Activated CD8-positive, alpha-beta T cell treated with anti-CD3 and anti-CD28 coated beads for 36 hours (primary cell): ENCODE measurements at regions of chr16 and their contacts with region 1.

Region 1: GRCh38 chr16:84511180-84511824 is 6.8 kb upstream of the MEAK7 start:
- DNase-seq: peak; percentile 92
- ATAC-seq: peak; percentile 9
- H3K4me3 Mint-ChIP-seq: peak overlapping the region; percentile 39
- H3K27ac Mint-ChIP-seq: peak overlapping the region; percentile 80
- H3K4me1 Mint-ChIP-seq: peaks cover 74% of the 10 kb centered on the region
- H3K27me3 Mint-ChIP-seq: no peaks in the 10 kb centered on the region
- CTCF ChIP-seq: peak; percentile 94

Region 2: GRCh38 chr16:84266451-84266850 is 244.9 kb before region 1 on chr16:
- CTCF ChIA-PET with region 1: no interaction called
- POLR2A ChIA-PET with region 1: no interaction called
- intact Hi-C with region 1: no loop called
- DNase-seq: peak; percentile 55
- ATAC-seq: peak; percentile 93
- H3K4me3 Mint-ChIP-seq: no peak overlapping the region
- H3K27ac Mint-ChIP-seq: no peak overlapping the region
- H3K4me1 Mint-ChIP-seq: no peaks in the 10 kb centered on the region
- H3K27me3 Mint-ChIP-seq: peaks cover 2% of the 10 kb centered on the region
- CTCF ChIP-seq: no peak

Region 3: DNA sequence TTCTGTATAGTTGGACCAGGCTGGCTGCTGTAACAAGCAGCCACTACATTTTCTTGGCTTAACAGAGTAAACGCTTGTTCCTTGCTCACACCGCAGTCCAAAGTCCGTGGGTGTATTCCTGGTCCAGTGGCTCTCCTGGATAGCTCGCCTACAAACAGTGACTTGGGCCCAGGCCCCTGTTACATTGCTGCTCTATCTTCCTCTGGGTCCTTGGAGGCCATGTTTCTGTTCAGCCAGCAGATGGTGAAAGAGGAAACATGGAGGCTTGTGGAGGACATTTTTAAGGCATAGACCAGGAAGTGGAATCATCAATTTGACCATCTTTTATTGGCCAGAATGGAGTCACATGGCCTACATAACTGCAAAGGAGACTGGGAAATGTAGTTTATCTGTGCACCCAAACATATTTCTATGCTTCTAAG is 87.9 kb before region 1 on chr16:
- CTCF ChIA-PET with region 1: no interaction called
- POLR2A ChIA-PET with region 1: no interaction called
- intact Hi-C with region 1: no loop called
- DNase-seq: no peak
- ATAC-seq: peak; percentile 79
- H3K4me3 Mint-ChIP-seq: no peak overlapping the region
- H3K27ac Mint-ChIP-seq: no peak overlapping the region
- H3K4me1 Mint-ChIP-seq: peaks cover 2% of the 10 kb centered on the region
- H3K27me3 Mint-ChIP-seq: peaks cover 3% of the 10 kb centered on the region
- CTCF ChIP-seq: no peak

Region 4: DNA sequence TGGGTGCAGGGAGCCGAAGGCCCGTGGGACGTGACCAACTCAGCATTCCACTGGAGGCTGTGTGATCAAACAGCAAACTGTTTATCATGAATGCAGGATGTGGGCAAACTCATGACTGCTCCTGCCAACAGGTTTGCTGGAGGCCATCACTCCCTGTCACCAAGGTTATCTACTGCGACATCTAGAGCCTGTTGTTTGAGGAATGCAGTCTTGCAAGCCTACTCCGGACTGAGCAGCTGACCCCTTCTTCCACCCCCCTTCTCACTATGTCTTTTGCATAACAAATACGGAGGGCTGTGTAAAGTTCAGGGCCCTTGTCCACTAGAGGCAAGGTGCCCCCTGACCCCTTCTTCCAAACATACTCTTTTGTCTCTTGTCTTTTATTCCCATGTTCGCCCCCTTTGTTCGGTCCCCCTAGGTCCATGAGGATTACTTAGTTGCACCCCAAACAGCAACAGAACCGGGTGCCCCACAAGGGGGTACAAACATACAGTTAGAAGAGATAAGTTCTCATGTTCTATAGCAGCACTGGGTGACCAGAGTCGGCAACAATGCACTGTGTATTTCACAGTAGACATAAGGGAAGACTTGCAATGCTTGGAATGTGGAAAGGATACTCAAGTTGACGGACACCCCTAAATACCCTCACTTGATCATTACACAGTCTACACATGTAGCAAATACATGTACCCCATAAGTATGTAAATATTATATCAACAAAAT is 35.5 kb before region 1 on chr16:
- CTCF ChIA-PET with region 1: no interaction called
- POLR2A ChIA-PET with region 1: no interaction called
- intact Hi-C with region 1: no loop called
- DNase-seq: no peak
- ATAC-seq: no peak
- H3K4me3 Mint-ChIP-seq: no peak overlapping the region
- H3K27ac Mint-ChIP-seq: no peak overlapping the region
- H3K4me1 Mint-ChIP-seq: peaks cover 6% of the 10 kb centered on the region
- H3K27me3 Mint-ChIP-seq: no peaks in the 10 kb centered on the region
- CTCF ChIP-seq: no peak

Region 5: DNA sequence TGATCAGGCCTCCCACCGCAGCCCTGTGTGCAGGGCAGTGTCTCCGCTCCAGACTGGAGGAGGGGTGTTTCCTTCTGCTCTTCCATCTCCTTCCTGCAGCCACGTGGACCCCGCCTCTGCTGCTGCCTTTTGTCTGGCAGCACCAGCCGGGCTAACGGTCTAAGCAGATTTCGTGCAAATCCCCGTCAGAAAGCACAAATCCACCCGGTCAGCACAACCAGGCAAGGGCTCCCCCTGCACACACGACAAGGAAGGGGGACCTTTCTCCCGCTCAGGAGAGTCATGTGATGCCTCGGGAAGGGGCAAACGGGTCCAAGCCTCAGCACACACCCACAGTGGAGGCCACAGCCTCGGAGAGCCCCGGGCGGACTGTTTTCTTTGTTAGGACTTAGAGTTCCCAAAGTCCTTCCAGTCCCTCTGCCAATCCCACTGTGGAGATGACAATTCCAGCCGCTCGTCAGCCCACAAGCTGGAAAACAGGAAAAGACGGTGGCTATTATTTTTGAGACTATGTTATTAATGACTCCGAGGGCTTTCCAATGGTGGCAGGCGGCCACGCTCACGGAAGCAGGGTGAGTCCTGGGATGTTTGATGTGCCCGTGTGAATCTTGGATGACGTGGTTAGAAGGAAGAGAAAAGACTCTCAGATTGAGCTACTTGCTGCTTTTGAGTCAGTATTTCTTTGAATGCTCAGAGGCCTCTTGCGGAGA is 15.6 kb after region 1 on chr16:
- CTCF ChIA-PET with region 1: interaction called, 8 read pairs
- POLR2A ChIA-PET with region 1: interaction called, 16 read pairs
- intact Hi-C with region 1: no loop called
- DNase-seq: no peak
- ATAC-seq: no peak
- H3K4me3 Mint-ChIP-seq: no peak overlapping the region
- H3K27ac Mint-ChIP-seq: no peak overlapping the region
- H3K4me1 Mint-ChIP-seq: peaks cover 11% of the 10 kb centered on the region
- H3K27me3 Mint-ChIP-seq: no peaks in the 10 kb centered on the region
- CTCF ChIP-seq: no peak

Region 6: DNA sequence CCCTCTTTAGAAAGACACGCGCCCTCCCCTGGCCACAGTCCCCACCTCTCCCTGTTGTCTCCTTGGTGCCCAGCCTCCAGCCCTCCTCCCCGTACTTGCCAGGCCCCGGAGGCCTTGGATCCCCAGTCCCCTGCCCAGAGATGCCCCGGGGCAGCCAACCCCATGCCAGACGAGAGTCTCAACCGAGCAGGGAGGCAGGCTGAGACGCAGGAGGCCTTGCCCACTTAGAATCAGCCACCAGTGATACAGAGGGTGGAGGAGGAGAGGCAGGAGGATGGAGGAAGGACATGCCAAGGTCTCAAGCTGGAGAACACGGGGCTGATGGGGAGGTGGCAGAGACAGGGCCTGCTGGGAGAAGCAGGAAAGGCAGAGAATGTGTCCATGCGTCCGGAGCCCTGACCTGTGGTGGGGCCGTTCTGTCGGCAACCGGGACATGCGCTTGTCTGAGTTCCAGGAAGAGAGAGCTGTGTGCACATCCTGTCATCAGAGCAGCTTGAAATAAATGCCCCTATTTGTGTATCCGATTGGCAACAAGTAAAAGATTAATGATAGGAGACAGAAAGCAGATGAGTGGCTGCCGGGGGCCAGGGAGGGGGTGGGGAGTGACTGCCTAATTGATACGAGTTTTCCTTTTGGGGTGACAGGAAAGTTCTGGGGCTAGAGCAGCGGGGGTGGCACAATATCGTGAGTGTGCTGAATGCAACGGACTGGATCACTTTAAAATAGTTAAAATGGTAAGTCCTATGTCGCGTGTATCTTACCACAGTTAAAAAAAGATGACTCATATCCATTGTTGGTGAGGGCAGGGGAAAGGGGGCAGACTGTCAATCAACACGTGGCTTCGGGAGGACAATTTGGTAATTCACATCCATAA is 37.9 kb after region 1 on chr16:
- CTCF ChIA-PET with region 1: interaction called, 26 read pairs
- POLR2A ChIA-PET with region 1: interaction called, 20 read pairs
- intact Hi-C with region 1: loop called (anchors 2 kb)
- DNase-seq: peak; percentile 82
- ATAC-seq: peak; percentile 57
- H3K4me3 Mint-ChIP-seq: peak overlapping the region; percentile 84
- H3K27ac Mint-ChIP-seq: peak overlapping the region; percentile 98
- H3K4me1 Mint-ChIP-seq: peaks cover 54% of the 10 kb centered on the region
- H3K27me3 Mint-ChIP-seq: no peaks in the 10 kb centered on the region
- CTCF ChIP-seq: peak; percentile 19

Region 7: GRCh38 chr16:84555418-84556195 is 44.3 kb after region 1 on chr16:
- CTCF ChIA-PET with region 1: interaction called, 26 read pairs
- POLR2A ChIA-PET with region 1: interaction called, 11 read pairs
- intact Hi-C with region 1: no loop called
- DNase-seq: no peak
- ATAC-seq: no peak
- H3K4me3 Mint-ChIP-seq: no peak overlapping the region
- H3K27ac Mint-ChIP-seq: no peak overlapping the region
- H3K4me1 Mint-ChIP-seq: peaks cover 29% of the 10 kb centered on the region
- H3K27me3 Mint-ChIP-seq: no peaks in the 10 kb centered on the region
- CTCF ChIP-seq: no peak

Region 8: GRCh38 chr16:84599521-84600202 is 88.4 kb after region 1 on chr16:
- CTCF ChIA-PET with region 1: interaction called, 23 read pairs
- POLR2A ChIA-PET with region 1: interaction called, 11 read pairs
- intact Hi-C with region 1: loop called (anchors 2 kb)
- DNase-seq: peak; percentile 93
- ATAC-seq: peak; percentile 61
- H3K4me3 Mint-ChIP-seq: peak overlapping the region; percentile 83
- H3K27ac Mint-ChIP-seq: peak overlapping the region; percentile 100
- H3K4me1 Mint-ChIP-seq: peaks cover 92% of the 10 kb centered on the region
- H3K27me3 Mint-ChIP-seq: no peaks in the 10 kb centered on the region
- CTCF ChIP-seq: no peak